CD8-positive, alpha-beta T cell (primary cell): ENCODE measurements at regions of chr12 and their contacts with region 1.

Region 1: GRCh38 chr12:47742253-47742825 is 16.3 kb downstream of the RAPGEF3 start:
- DNase-seq: peak; percentile 45 to 83 (median 72)
- ATAC-seq: peak; percentile 57
- H3K4me3 ChIP-seq: no peak overlapping the region
- H3K4me3 Mint-ChIP-seq: no peak overlapping the region
- H3K27ac ChIP-seq: no peak overlapping the region
- H3K27ac Mint-ChIP-seq: no peak overlapping the region
- H3K4me1 ChIP-seq: peaks cover 27% of the 10 kb centered on the region
- H3K4me1 Mint-ChIP-seq: peaks cover 32% of the 10 kb centered on the region
- H3K27me3 ChIP-seq: peaks cover 0 to 4% of the 10 kb centered on the region in 2 experiments
- H3K27me3 Mint-ChIP-seq: peaks cover 5% of the 10 kb centered on the region
- CTCF ChIP-seq: peak; percentile 98

Region 2: DNA sequence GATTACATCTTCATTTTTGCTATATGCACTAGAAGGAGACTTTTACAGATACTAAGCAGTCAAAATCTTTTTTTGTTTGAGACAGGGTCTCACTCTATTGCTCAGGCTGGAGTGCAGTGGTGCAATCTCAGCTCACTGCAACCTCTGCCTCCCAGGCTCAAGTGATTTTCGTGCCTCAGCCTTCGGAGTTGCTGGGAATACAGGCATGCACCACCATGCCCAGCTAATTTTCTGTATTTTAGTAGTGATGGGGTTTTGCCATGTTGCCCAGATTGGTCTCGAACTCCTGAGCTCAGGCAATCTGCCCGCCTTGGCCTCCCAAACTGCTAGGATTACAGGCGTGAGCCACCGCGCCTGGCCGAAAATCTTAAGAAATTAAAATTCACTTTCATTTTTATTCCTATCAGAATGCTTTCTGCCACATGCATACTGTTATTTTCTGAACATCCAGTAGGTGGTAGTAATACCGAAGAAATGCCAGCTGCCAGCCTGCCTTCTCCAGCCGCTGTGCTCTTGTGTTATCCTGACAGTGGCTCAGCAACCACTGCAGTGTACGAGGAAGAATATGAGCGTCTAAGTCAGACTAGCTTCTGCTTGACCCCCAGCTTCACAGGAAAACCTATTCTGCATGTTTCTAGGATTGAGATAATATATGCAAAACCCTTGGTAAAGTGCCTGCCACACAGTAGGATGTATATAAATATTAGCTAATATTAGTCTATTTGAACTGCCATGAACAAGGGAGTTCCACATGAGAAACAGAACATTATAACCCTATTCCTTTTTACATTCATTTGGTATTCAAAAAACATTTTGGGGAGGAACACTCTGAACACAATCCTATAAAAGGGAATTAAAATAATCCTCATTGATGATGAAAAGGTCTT is 90.7 kb before region 1 on chr12:
- CTCF ChIA-PET with region 1: interaction called, 11 read pairs
- POLR2A ChIA-PET with region 1: no interaction called
- intact Hi-C with region 1: no loop called
- DNase-seq: peak in 7 of 9 experiments; percentile 29 to 73 (median 42)
- ATAC-seq: peak; percentile 96
- H3K4me3 ChIP-seq: no peak overlapping the region
- H3K4me3 Mint-ChIP-seq: peak overlapping the region; percentile 64
- H3K27ac ChIP-seq: no peak overlapping the region
- H3K27ac Mint-ChIP-seq: peak overlapping the region; percentile 19
- H3K4me1 ChIP-seq: peaks cover 9% of the 10 kb centered on the region
- H3K4me1 Mint-ChIP-seq: peaks cover 16% of the 10 kb centered on the region
- H3K27me3 ChIP-seq: no peaks in the 10 kb centered on the region
- H3K27me3 Mint-ChIP-seq: no peaks in the 10 kb centered on the region
- CTCF ChIP-seq: peak; percentile 90

Region 3: GRCh38 chr12:47725893-47726292 is 16.4 kb before region 1 on chr12:
- CTCF ChIA-PET with region 1: interaction called, 84 read pairs
- POLR2A ChIA-PET with region 1: no interaction called
- intact Hi-C with region 1: no loop called
- DNase-seq: no peak
- ATAC-seq: no peak
- H3K4me3 ChIP-seq: no peak overlapping the region
- H3K4me3 Mint-ChIP-seq: no peak overlapping the region
- H3K27ac ChIP-seq: no peak overlapping the region
- H3K27ac Mint-ChIP-seq: no peak overlapping the region
- H3K4me1 ChIP-seq: peaks cover 15% of the 10 kb centered on the region
- H3K4me1 Mint-ChIP-seq: peaks cover 16% of the 10 kb centered on the region
- H3K27me3 ChIP-seq: peaks cover 0 to 5% of the 10 kb centered on the region in 2 experiments
- H3K27me3 Mint-ChIP-seq: no peaks in the 10 kb centered on the region
- CTCF ChIP-seq: no peak

Region 4: DNA sequence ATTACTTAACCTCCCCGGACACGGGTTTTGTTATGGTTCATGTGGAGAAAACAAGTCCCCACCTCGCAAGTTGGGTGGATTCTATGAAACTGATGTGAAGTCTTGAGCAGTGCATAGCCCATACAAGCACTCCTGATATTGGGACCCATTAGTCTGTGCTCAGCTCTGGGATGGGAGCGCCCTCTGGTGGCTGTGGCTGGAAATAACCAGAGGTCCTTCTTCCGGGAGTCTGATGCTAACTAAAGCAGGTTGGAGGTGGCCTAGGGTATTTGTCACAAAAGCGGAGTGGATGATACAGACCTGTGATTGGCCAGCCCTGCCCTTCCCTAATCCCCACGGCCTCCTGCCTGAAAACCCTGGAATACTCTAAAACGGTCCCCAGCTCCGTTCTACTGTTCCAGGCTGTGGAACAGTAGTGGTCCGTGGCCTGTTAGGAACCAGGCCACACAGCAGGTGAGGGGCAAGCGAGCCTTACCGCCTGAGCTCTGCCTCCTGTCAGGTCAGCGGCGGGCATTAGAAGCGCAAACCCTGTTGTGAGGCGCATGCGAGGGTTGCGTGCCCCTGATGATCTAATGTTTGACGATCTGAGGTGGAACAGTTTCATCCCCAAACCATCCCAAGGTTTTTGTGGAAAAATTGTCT is 37.1 kb after region 1 on chr12:
- CTCF ChIA-PET with region 1: interaction called, 500 read pairs
- POLR2A ChIA-PET with region 1: interaction called, 4 read pairs
- intact Hi-C with region 1: loop called (anchors 1 kb)
- DNase-seq: peak; percentile 87 to 98 (median 91)
- ATAC-seq: peak; percentile 98
- H3K4me3 ChIP-seq: no peak overlapping the region
- H3K4me3 Mint-ChIP-seq: no peak overlapping the region
- H3K27ac ChIP-seq: no peak overlapping the region
- H3K27ac Mint-ChIP-seq: no peak overlapping the region
- H3K4me1 ChIP-seq: peaks cover 8% of the 10 kb centered on the region
- H3K4me1 Mint-ChIP-seq: peaks cover 14% of the 10 kb centered on the region
- H3K27me3 ChIP-seq: no peaks in the 10 kb centered on the region
- H3K27me3 Mint-ChIP-seq: no peaks in the 10 kb centered on the region
- CTCF ChIP-seq: peak; percentile 82

Region 5: GRCh38 chr12:47812797-47813510 is 70.6 kb after region 1 on chr12:
- CTCF ChIA-PET with region 1: interaction called, 44 read pairs
- POLR2A ChIA-PET with region 1: interaction called, 4 read pairs
- intact Hi-C with region 1: no loop called
- DNase-seq: peak; percentile 77 to 95 (median 92)
- ATAC-seq: peak; percentile 73
- H3K4me3 ChIP-seq: peak overlapping the region; percentile 44 to 59
- H3K4me3 Mint-ChIP-seq: peak overlapping the region; percentile 82
- H3K27ac ChIP-seq: peak overlapping the region; percentile 65 to 73
- H3K27ac Mint-ChIP-seq: peak overlapping the region; percentile 97
- H3K4me1 ChIP-seq: peaks cover 95% of the 10 kb centered on the region
- H3K4me1 Mint-ChIP-seq: peaks cover 93% of the 10 kb centered on the region
- H3K27me3 ChIP-seq: no peaks in the 10 kb centered on the region
- H3K27me3 Mint-ChIP-seq: no peaks in the 10 kb centered on the region
- CTCF ChIP-seq: no peak

Region 6: GRCh38 chr12:47963340-47964040 is 221.2 kb after region 1 on chr12 and contains the start of gene TMEM106C:
- CTCF ChIA-PET with region 1: interaction called, 5 read pairs
- POLR2A ChIA-PET with region 1: interaction called, 4 read pairs
- intact Hi-C with region 1: loop called in 1 of 2 experiments (anchors 5 kb)
- DNase-seq: peak; percentile 82 to 96 (median 90)
- ATAC-seq: peak; percentile 98
- H3K4me3 ChIP-seq: peak within 1 kb of the TSS; percentile 67 to 76
- H3K4me3 Mint-ChIP-seq: peak within 1 kb of the TSS; percentile 97
- H3K27ac ChIP-seq: peak within 1 kb of the TSS in 1 of 2 experiments; percentile 43
- H3K27ac Mint-ChIP-seq: peak within 1 kb of the TSS; percentile 83
- H3K4me1 ChIP-seq: peaks cover 13% of the 10 kb centered on the region
- H3K4me1 Mint-ChIP-seq: peaks cover 25% of the 10 kb centered on the region
- H3K27me3 ChIP-seq: no peaks in the 10 kb centered on the region
- H3K27me3 Mint-ChIP-seq: peaks cover 11% of the 10 kb centered on the region
- CTCF ChIP-seq: peak; percentile 93
- total RNA-seq, gene TMEM106C: 12.1 to 13.1 TPM